ENCODE measurements at regions of chr5 and their contacts with region 1.

Region 1: GRCh38 chr5:55159763-55160492 is at the start of gene GPX8:
- H3K4me3 ChIP-seq: peak within 1 kb of the TSS; percentile 54
- H3K27ac ChIP-seq: peak within 1 kb of the TSS; percentile 2; the same call in 1 of the 2 replicates
- H3K4me1 ChIP-seq: no peaks in the 10 kb centered on the region
- CTCF ChIP-seq: peak; percentile 62; the same call in 1 of the 2 replicates

Region 2: GRCh38 chr5:54912021-54912420 is 247.9 kb before region 1 on chr5:
- CTCF ChIA-PET with region 1: interaction called, 56 read pairs
- POLR2A ChIA-PET with region 1: interaction called, 8 read pairs
- H3K4me3 ChIP-seq: no peak overlapping the region
- H3K27ac ChIP-seq: no peak overlapping the region
- H3K4me1 ChIP-seq: no peaks in the 10 kb centered on the region
- CTCF ChIP-seq: no peak

Region 3: GRCh38 chr5:55140908-55141665 is 18.8 kb before region 1 on chr5:
- CTCF ChIA-PET with region 1: interaction called, 16 read pairs
- POLR2A ChIA-PET with region 1: no interaction called
- H3K4me3 ChIP-seq: no peak overlapping the region
- H3K27ac ChIP-seq: no peak overlapping the region
- H3K4me1 ChIP-seq: no peaks in the 10 kb centered on the region
- CTCF ChIP-seq: no peak

Region 4: GRCh38 chr5:55146543-55147151 is 13.3 kb before region 1 on chr5:
- CTCF ChIA-PET with region 1: interaction called, 16 read pairs
- POLR2A ChIA-PET with region 1: interaction called, 3 read pairs
- H3K4me3 ChIP-seq: no peak overlapping the region
- H3K27ac ChIP-seq: no peak overlapping the region
- H3K4me1 ChIP-seq: no peaks in the 10 kb centered on the region
- CTCF ChIP-seq: peak; percentile 84

Measured in HEK293 (cell line).